Heart right ventricle (tissue), 16 donors: ENCODE measurements at regions of chr9 and their contacts with region 1.

Region 1: GRCh38 chr9:87099407-87099806 is 152.1 kb upstream of the GAS1 start:
- DNase-seq: no peak
- ATAC-seq: peak in 2 of 8 donors; percentile 14 to 20
- H3K4me3 ChIP-seq: no peak overlapping the region
- H3K27ac ChIP-seq: no peak overlapping the region
- H3K4me1 ChIP-seq: peaks cover 0 to 6% (median 0%) of the 10 kb centered on the region in 9 donors
- H3K27me3 ChIP-seq: peaks cover 0 to 16% (median 0%) of the 10 kb centered on the region in 7 donors
- CTCF ChIP-seq: no peak

Region 2: DNA sequence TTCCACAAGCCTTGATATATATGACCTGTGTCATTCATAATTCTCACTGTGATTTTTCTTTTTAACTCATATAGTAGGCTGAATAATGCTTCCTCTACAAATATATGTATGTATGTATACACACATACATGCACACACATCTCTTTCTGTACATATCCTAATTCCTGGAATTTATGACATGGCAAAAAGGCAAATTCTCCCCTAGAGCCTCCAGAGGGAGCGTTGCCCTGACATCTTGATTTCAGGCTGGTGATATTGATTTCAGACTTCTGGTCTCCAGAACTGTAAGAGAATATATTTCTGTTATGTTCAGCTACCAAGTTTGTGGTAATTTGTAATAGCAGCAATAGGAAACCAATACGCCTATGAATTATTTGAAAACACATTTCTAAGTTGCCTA is 14.5 kb after region 1 on chr9:
- intact Hi-C with region 1: loop called in 1 of 10 experiments (anchors 2 kb)
- DNase-seq: no peak
- ATAC-seq: no peak
- H3K4me3 ChIP-seq: no peak overlapping the region
- H3K27ac ChIP-seq: no peak overlapping the region
- H3K4me1 ChIP-seq: peaks cover 0 to 33% (median 12%) of the 10 kb centered on the region in 9 donors
- H3K27me3 ChIP-seq: no peaks in the 10 kb centered on the region
- CTCF ChIP-seq: no peak

Region 3: DNA sequence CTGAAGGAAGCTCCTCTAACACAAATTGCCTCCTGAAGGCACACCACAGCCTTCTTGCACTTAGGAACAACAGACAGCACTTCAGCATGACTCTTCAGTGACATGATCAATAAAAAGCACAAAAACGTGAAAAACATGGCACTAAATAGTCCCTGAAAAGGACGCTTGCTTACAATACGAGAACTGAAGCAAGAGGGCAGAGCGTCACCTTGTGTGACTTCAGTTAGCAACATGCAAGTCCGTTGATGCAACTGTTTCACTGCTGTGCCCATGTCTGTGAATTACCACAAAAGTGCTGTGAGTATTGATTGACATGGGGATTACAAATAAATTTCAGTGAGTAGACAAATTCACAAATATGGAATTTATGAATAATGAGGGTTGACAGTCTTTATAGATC is 67.8 kb after region 1 on chr9:
- intact Hi-C with region 1: no loop called
- DNase-seq: no peak
- ATAC-seq: no peak
- H3K4me3 ChIP-seq: no peak overlapping the region
- H3K27ac ChIP-seq: no peak overlapping the region
- H3K4me1 ChIP-seq: no peaks in the 10 kb centered on the region
- H3K27me3 ChIP-seq: peaks cover 0 to 4% (median 0%) of the 10 kb centered on the region in 7 donors
- CTCF ChIP-seq: no peak